CD4-positive, alpha-beta memory T cell (primary cell): ENCODE measurements at regions of chr1 and their contacts with region 1.

Region 1: DNA sequence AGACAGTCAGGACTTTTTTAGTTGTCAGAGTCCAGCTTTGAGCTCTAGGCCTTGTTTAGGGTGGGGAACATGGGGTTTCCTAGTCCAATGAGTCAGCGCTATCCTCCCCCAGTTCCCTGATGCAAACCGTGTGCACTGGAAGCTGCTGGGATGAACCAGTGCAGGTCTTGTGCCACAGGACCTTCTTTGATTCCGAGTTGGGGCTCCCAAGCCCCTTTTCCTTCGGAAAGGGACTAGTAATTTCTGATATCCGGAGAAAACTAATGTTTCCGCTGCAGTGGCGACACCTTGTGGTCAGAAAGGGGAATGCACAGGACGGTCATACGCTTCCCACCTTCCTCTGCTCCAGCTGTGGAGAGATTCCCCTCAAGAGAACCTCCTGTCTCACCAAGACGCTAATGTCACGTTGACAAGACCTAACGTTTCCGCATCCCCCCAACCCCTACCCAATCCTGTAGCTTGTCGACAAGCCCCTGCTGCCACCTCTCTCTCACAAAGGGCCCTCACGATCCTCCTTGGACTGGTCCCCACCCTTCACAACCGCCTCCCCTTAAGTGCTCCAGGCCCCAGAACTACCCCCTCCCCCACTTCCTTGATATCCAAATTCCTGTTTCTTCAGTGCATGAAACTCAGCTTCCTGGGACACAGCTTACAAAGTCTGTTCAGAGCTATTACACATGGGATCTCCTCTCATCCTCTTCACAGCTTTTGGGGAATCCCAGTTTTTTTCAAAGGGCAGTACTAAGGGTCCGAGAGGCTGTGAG is 30.9 kb downstream of the GPA33 start:
- DNase-seq: peak; percentile 47 to 67 (median 58)
- H3K4me3 ChIP-seq: no peak overlapping the region
- H3K4me3 Mint-ChIP-seq: peak overlapping the region in 1 of 8 donors; percentile 41
- H3K27ac ChIP-seq: no peak overlapping the region
- H3K27ac Mint-ChIP-seq: peak overlapping the region in 4 of 7 donors; percentile 13 to 88 (median 20)
- H3K4me1 ChIP-seq: peaks cover 7% of the 10 kb centered on the region
- H3K4me1 Mint-ChIP-seq: peaks cover 3 to 10% (median 6%) of the 10 kb centered on the region in 4 donors
- H3K27me3 ChIP-seq: no peaks in the 10 kb centered on the region
- H3K27me3 Mint-ChIP-seq: no peaks in the 10 kb centered on the region

Region 2: DNA sequence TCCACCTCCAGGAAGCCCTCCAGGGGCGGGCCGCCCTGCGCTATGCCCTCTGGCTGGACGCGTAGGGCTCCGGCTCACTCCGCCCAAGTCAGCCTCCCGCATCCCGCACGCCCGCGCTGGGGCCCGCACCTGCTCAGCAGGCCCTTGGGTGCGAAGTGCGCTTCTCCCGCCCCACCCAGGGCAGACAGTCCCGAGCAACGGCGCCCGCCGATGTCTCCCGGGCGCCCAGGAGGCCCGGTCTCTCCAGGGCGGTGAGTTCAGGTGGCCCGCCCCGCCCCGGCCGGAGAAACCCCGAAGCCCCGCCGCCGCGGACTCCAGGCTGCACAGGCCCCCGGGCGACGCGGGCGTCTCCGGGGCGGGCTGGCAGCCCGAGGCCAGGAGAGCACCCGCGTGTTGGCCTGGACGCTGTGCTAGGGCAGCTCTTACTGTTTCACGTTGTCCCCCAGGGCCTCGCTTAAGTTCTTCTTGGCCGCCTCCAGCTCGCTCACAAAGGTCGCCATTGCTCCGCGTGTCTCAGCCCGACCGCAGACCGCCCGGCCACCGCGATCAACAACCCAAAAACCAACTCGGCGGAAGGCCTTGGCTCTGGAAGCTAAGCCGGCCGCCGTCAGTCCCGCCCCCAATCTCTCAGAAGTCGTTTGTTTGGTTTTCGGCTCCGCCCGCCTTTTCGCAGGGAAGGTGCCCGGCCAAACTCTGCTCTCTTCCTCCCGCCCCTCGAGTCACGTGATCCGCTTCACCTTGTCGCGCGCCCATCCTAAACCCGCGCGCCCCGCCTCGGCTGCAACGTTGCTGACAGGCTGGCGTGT is 183.3 kb before region 1 on chr1 and contains the start of gene TADA1:
- CTCF ChIA-PET with region 1: interaction called, 14 read pairs
- POLR2A ChIA-PET with region 1: interaction called, 5 read pairs
- intact Hi-C with region 1: no loop called
- DNase-seq: peak; percentile 96 to 99 (median 97)
- H3K4me3 ChIP-seq: peak within 1 kb of the TSS; percentile 52 to 88
- H3K4me3 Mint-ChIP-seq: peak within 1 kb of the TSS; percentile 95 to 100 (median 99)
- H3K27ac ChIP-seq: peak within 1 kb of the TSS; percentile 69
- H3K27ac Mint-ChIP-seq: peak within 1 kb of the TSS; percentile 92 to 99 (median 99)
- H3K4me1 ChIP-seq: peaks cover 32% of the 10 kb centered on the region
- H3K4me1 Mint-ChIP-seq: peaks cover 32 to 56% (median 45%) of the 10 kb centered on the region in 4 donors
- H3K27me3 ChIP-seq: no peaks in the 10 kb centered on the region
- H3K27me3 Mint-ChIP-seq: peaks cover 0 to 1% of the 10 kb centered on the region in 2 donors
- total RNA-seq, gene TADA1: 15.3 to 16.0 TPM

Region 3: DNA sequence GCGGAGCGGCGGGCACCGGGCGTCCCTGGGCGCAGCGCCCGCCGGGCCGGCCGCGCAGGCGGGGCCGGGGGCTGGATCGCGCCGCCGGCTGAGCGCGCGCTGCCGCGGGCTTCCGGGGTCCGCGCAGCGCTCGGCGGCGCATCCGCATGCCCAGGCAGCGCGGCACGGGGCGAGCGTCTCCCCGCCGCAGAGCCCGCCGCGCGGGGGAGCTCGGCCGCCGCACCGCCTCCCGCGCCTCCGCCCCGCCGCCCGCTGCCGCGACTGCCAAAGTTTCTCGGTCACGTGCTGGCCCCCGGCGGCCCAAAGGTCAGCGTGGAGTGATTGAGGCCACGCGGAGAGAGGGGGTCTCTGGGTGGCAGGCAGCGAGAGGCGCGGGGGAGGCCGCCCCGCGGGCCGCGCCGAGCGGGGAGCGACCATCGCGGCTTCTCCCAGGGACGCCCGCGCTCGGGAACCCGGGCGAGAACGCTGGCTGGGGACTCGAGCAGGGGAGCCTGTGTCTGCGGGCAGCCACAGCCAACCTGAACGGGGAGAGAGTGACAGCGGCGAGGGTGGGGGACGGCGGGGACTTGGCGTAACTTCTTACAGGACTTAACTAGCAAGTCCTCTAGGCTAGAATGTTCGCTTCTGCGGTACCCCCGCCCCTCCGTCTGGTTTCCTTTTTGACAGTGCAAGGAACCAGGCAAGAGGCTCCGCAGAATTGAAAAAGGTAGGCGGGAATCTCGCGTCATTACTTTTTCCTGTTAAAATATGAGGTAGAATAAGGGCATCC is 83.7 kb before region 1 on chr1 and contains the start of gene ILDR2:
- CTCF ChIA-PET with region 1: interaction called, 11 read pairs
- POLR2A ChIA-PET with region 1: interaction called, 3 read pairs
- intact Hi-C with region 1: loop called (anchors 2 kb)
- DNase-seq: peak; percentile 31 to 72 (median 42)
- H3K4me3 ChIP-seq: peak within 1 kb of the TSS; percentile 28 to 59
- H3K4me3 Mint-ChIP-seq: peak within 1 kb of the TSS; percentile 81 to 96 (median 90)
- H3K27ac ChIP-seq: no peak within 1 kb of the TSS
- H3K27ac Mint-ChIP-seq: peak within 1 kb of the TSS; percentile 20 to 82 (median 73)
- H3K4me1 ChIP-seq: peaks cover 13% of the 10 kb centered on the region
- H3K4me1 Mint-ChIP-seq: peaks cover 13 to 26% (median 21%) of the 10 kb centered on the region in 4 donors
- H3K27me3 ChIP-seq: peaks cover 10% of the 10 kb centered on the region
- H3K27me3 Mint-ChIP-seq: peaks cover 14 to 23% of the 10 kb centered on the region in 2 donors
- total RNA-seq, gene ILDR2: 0.25 to 0.52 TPM

Region 4: DNA sequence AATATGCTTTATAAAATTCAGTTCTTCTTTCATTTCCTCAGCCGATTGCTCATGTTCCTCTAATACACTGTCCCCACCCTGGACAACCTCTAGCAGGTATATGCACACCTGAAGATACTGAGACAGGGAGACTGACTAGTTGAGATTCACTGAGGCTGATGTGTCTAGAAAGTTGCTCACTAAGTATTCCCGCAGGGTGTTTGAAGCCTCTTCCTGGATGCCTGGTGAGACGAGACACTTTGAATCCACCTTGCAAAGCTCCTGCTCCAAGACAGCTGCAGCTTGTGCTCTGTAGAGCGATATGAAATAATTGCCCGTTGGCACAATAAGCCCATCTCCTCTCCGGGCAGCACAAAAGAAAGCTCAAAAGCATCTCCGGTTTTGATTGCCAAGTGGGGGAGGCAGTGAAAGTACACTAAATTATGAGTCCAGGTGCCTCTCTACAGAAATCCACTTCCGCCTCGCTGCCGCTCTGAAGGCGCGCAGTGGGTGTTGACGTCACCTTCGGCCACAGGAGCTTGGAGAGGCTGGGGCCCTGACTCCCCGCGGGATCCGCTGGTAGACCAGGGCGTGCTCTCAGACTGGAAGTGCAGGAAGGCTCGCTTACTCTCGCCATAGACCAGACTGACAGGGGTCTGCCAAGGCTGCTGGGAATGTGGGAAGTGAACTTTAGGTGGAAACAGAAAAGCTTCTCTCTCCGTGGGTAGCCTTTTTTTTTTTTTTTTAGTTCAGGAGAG is 15.3 kb before region 1 on chr1:
- CTCF ChIA-PET with region 1: interaction called, 23 read pairs
- POLR2A ChIA-PET with region 1: interaction called, 5 read pairs
- intact Hi-C with region 1: no loop called
- DNase-seq: peak; percentile 61 to 83 (median 72)
- H3K4me3 ChIP-seq: peak overlapping the region; percentile 1 to 33
- H3K4me3 Mint-ChIP-seq: peak overlapping the region; percentile 84 to 94 (median 88)
- H3K27ac ChIP-seq: peak overlapping the region; percentile 3
- H3K27ac Mint-ChIP-seq: peak overlapping the region; percentile 70 to 94 (median 80)
- H3K4me1 ChIP-seq: peaks cover 13% of the 10 kb centered on the region
- H3K4me1 Mint-ChIP-seq: peaks cover 4 to 18% (median 12%) of the 10 kb centered on the region in 4 donors
- H3K27me3 ChIP-seq: no peaks in the 10 kb centered on the region
- H3K27me3 Mint-ChIP-seq: peaks cover 4 to 7% of the 10 kb centered on the region in 2 donors

Region 5: GRCh38 chr1:167090314-167090942 is 31.2 kb after region 1 on chr1 and contains the start of gene GPA33:
- CTCF ChIA-PET with region 1: interaction called, 14 read pairs
- POLR2A ChIA-PET with region 1: no interaction called
- intact Hi-C with region 1: no loop called
- DNase-seq: peak in 4 of 5 donors; percentile 60 to 70 (median 64)
- H3K4me3 ChIP-seq: peak within 1 kb of the TSS; percentile 2 to 44
- H3K4me3 Mint-ChIP-seq: peak within 1 kb of the TSS; percentile 73 to 88 (median 81)
- H3K27ac ChIP-seq: peak within 1 kb of the TSS; percentile 51
- H3K27ac Mint-ChIP-seq: peak within 1 kb of the TSS; percentile 89 to 98 (median 95)
- H3K4me1 ChIP-seq: peaks cover 42% of the 10 kb centered on the region
- H3K4me1 Mint-ChIP-seq: peaks cover 17 to 45% (median 34%) of the 10 kb centered on the region in 4 donors
- H3K27me3 ChIP-seq: no peaks in the 10 kb centered on the region
- H3K27me3 Mint-ChIP-seq: peaks cover 0 to 2% of the 10 kb centered on the region in 2 donors
- total RNA-seq, gene GPA33: 21.2 to 21.6 TPM

Region 6: GRCh38 chr1:167601442-167602383 is 542.5 kb after region 1 on chr1:
- CTCF ChIA-PET with region 1: no interaction called
- POLR2A ChIA-PET with region 1: no interaction called
- intact Hi-C with region 1: no loop called
- DNase-seq: peak in 2 of 5 donors; percentile 10 to 20
- H3K4me3 ChIP-seq: peak overlapping the region in 1 of 2 donors; percentile 16
- H3K4me3 Mint-ChIP-seq: peak overlapping the region in 7 of 8 donors; percentile 46 to 82 (median 66)
- H3K27ac ChIP-seq: no peak overlapping the region
- H3K27ac Mint-ChIP-seq: peak overlapping the region; percentile 5 to 88 (median 60)
- H3K4me1 ChIP-seq: peaks cover 39% of the 10 kb centered on the region
- H3K4me1 Mint-ChIP-seq: peaks cover 31 to 47% (median 41%) of the 10 kb centered on the region in 4 donors
- H3K27me3 ChIP-seq: no peaks in the 10 kb centered on the region
- H3K27me3 Mint-ChIP-seq: no peaks in the 10 kb centered on the region